Esophagus muscularis mucosa (tissue), 4 donors: ENCODE measurements at regions of chr2 and their contacts with region 1.

Region 1: GRCh38 chr2:177164584-177165052 is 48.0 kb upstream of the HNRNPA3 start:
- DNase-seq: peak; percentile 95
- H3K4me3 ChIP-seq: peak overlapping the region; percentile 45 to 52 (median 49)
- H3K27ac ChIP-seq: peak overlapping the region; percentile 73 to 84 (median 81)
- H3K4me1 ChIP-seq: peaks cover 7 to 24% (median 18%) of the 10 kb centered on the region in 4 donors
- H3K27me3 ChIP-seq: peaks cover 0 to 5% (median 0%) of the 10 kb centered on the region in 4 donors
- CTCF ChIP-seq: peak in 2 of 3 experiments; percentile 99
- EP300 ChIP-seq: no peak
- POLR2A ChIP-seq: no peak

Region 2: GRCh38 chr2:176638167-176639015 is 526.2 kb before region 1 on chr2:
- intact Hi-C with region 1: no loop called
- DNase-seq: no peak
- H3K4me3 ChIP-seq: peak overlapping the region; percentile 63 to 76 (median 66)
- H3K27ac ChIP-seq: peak overlapping the region in 3 of 4 donors; percentile 66 to 76 (median 70)
- H3K4me1 ChIP-seq: peaks cover 8 to 15% (median 10%) of the 10 kb centered on the region in 4 donors
- H3K27me3 ChIP-seq: peaks cover 0 to 94% (median 11%) of the 10 kb centered on the region in 4 donors
- CTCF ChIP-seq: peak; percentile 69 to 77 (median 73)
- EP300 ChIP-seq: no peak
- POLR2A ChIP-seq: no peak

Region 3: GRCh38 chr2:177212106-177212890 is 47.7 kb after region 1 on chr2 and contains the start of gene HNRNPA3:
- intact Hi-C with region 1: loop called (anchors 5 kb)
- DNase-seq: peak; percentile 100
- H3K4me3 ChIP-seq: peak within 1 kb of the TSS; percentile 84 to 91 (median 90)
- H3K27ac ChIP-seq: peak within 1 kb of the TSS; percentile 99 to 100 (median 99)
- H3K4me1 ChIP-seq: peaks cover 39 to 53% (median 50%) of the 10 kb centered on the region in 4 donors
- H3K27me3 ChIP-seq: no peaks in the 10 kb centered on the region
- CTCF ChIP-seq: peak; percentile 15 to 41 (median 24)
- EP300 ChIP-seq: peak; percentile 65
- POLR2A ChIP-seq: peak; percentile 85
- total RNA-seq, gene HNRNPA3: 59.2 to 72.3 (median 64.3) TPM

Region 4: DNA sequence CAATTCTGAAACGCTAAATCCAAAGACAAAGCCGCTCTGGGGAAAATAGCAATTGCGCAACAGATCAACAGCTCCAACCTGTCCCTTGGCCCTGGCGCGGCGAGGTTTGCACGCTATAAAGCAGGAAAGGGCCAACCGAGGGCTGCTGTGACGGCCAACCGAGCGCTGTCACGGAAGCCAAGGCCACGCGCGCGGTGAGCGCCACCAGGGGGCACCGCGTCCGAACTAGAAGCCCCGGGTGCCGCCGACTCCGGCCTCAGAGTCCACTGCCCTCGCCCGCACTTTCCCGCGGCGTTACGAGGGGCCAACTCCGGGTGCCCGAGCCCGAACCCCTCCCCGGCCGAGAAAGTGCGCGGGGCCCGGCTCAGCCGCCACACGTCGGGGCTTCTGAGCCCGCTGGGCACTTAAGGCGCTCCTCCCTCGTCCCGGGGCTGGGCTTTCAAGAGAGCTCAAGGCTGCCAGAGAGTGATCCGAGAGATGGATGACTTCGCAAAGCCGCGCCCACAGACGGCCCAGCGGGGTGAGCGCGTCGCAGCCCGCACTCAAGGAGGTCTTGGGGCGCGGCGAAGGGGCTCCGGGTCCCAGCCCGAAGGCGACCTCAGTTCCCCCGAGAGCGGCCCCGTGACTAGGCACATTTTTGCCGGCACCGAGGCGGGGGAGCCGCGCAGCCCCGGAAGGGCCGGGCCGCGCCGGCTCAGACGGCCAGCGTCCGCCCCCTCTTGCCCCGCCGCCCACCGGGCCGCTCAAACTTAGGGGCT is 99.0 kb after region 1 on chr2:
- intact Hi-C with region 1: loop called (anchors 2 kb)
- DNase-seq: peak; percentile 99
- H3K4me3 ChIP-seq: peak overlapping the region; percentile 92 to 100 (median 96)
- H3K27ac ChIP-seq: peak overlapping the region; percentile 99 to 100 (median 100)
- H3K4me1 ChIP-seq: peaks cover 40 to 55% (median 51%) of the 10 kb centered on the region in 4 donors
- H3K27me3 ChIP-seq: no peaks in the 10 kb centered on the region
- CTCF ChIP-seq: peak; percentile 78 to 92 (median 83)
- EP300 ChIP-seq: peak; percentile 72
- POLR2A ChIP-seq: peak; percentile 44

Region 5: GRCh38 chr2:177296040-177296439 is 131.4 kb after region 1 on chr2:
- intact Hi-C with region 1: loop called (anchors 10 kb)
- DNase-seq: no peak
- H3K4me3 ChIP-seq: no peak overlapping the region
- H3K27ac ChIP-seq: peak overlapping the region; percentile 58 to 74 (median 60)
- H3K4me1 ChIP-seq: peaks cover 10 to 15% (median 15%) of the 10 kb centered on the region in 4 donors
- H3K27me3 ChIP-seq: no peaks in the 10 kb centered on the region
- CTCF ChIP-seq: peak in 2 of 3 experiments; percentile 42 to 47
- EP300 ChIP-seq: no peak
- POLR2A ChIP-seq: no peak

Region 6: DNA sequence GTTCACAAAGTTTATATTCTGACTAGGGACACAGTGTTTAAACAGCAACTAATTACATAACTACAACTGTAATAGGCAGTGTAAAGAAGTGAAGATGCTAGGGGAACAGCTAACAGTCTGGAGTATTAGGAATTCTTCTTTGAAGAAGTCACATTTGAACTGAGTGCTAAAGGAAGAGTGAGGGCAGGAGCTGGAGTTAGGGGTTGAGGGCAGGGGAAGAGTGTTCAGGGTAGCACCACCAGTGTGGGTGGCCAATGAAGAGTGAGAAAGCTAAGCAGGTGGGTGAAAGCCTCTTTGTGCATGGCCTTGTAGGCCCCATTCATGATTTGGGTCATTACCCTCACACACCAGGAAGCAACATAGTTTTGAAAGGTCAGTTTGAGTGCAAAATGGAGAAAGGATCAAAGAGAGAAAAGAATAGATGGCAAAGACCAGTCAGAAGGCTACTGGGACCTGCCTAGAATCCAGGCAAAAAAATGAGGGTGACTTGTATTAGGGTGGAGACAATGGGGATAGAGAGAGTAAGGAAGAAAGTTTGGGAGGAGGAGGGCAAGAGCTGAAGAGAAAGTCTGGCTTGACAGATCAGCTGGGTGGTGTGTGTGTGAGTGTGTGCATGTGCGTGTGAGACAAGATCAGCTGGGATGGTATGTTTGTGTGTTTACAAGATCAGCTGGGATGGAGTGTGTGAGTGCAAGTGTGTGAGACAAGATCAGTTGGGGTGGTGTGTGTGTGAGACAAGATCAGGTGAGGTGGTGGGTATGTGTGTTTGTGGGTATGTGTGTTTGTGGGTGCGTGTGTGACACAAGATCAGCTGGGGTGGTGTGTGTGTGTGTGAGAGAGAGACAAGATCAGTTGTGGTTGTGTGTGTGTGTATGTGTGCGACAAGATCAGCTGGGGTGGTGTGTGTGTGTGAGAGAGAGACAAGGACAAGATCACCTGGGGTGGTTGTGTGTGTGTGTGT is 184.4 kb after region 1 on chr2:
- intact Hi-C with region 1: no loop called
- DNase-seq: no peak
- H3K4me3 ChIP-seq: no peak overlapping the region
- H3K27ac ChIP-seq: peak overlapping the region in 1 of 4 donors; percentile 10
- H3K4me1 ChIP-seq: peaks cover 15 to 31% (median 24%) of the 10 kb centered on the region in 4 donors
- H3K27me3 ChIP-seq: no peaks in the 10 kb centered on the region
- CTCF ChIP-seq: no peak
- EP300 ChIP-seq: no peak
- POLR2A ChIP-seq: no peak

Region 7: GRCh38 chr2:177419274-177419673 is 254.7 kb after region 1 on chr2:
- intact Hi-C with region 1: loop called (anchors 5 kb)
- DNase-seq: no peak
- H3K4me3 ChIP-seq: no peak overlapping the region
- H3K27ac ChIP-seq: no peak overlapping the region
- H3K4me1 ChIP-seq: peaks cover 17 to 27% (median 22%) of the 10 kb centered on the region in 4 donors
- H3K27me3 ChIP-seq: no peaks in the 10 kb centered on the region
- CTCF ChIP-seq: no peak
- EP300 ChIP-seq: no peak
- POLR2A ChIP-seq: no peak

Region 8: GRCh38 chr2:177724398-177725287 is 560.0 kb after region 1 on chr2:
- intact Hi-C with region 1: loop called (anchors 5 kb)
- DNase-seq: no peak
- H3K4me3 ChIP-seq: no peak overlapping the region
- H3K27ac ChIP-seq: no peak overlapping the region
- H3K4me1 ChIP-seq: peaks cover 0 to 7% (median 0%) of the 10 kb centered on the region in 4 donors
- H3K27me3 ChIP-seq: no peaks in the 10 kb centered on the region
- CTCF ChIP-seq: peak; percentile 71 to 84 (median 73)
- EP300 ChIP-seq: no peak
- POLR2A ChIP-seq: no peak